B cell (primary cell): ENCODE measurements at regions of chr3 and their contacts with region 1.

Region 1: DNA sequence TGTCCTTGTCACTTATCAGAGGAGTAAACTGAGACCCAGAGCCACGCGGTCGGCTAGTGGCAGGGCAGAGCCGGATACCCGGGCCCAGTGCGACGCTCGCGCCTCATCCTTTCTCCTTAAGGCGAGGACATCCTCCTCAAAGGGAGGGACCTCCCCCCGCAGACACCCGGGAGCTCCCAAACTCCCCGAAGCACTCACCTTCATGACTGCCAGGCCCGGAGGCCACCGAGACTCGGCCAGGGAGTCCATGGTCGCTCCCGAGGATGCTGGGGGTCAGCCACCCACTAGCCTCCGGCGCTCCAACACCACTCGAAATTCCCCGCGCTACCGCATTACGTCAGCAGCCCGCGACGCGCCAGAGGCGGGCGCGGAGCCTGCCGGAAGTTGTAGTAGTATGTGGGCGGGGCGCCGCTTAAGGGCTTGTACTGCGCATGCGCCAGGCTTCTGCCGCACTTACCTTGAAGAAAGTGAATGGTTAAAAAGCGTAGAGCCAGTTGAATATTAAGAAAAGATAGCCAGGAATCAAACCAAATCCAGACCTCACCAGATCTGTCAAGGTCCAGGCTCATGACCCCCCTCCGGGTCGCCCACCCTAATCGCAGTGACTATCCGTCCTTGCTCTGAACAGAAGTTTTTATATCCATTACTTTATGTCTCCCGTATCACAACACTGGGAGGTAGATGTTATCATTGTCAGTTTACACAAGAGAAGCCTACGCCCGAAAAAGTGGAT is at the start of gene RAD18:
- DNase-seq: peak; percentile 95
- ATAC-seq: peak; percentile 97
- H3K4me3 ChIP-seq: peak within 1 kb of the TSS; percentile 79 to 93 (median 85)
- H3K4me3 Mint-ChIP-seq: peak within 1 kb of the TSS; percentile 89
- H3K27ac ChIP-seq: peak within 1 kb of the TSS; percentile 81 to 93
- H3K27ac Mint-ChIP-seq: peak within 1 kb of the TSS; percentile 94
- H3K4me1 ChIP-seq: peaks cover 18 to 25% of the 10 kb centered on the region in 2 donors
- H3K4me1 Mint-ChIP-seq: peaks cover 34% of the 10 kb centered on the region
- H3K27me3 ChIP-seq: peaks cover 0 to 3% (median 0%) of the 10 kb centered on the region in 4 experiments
- H3K27me3 Mint-ChIP-seq: peaks cover 7% of the 10 kb centered on the region
- CTCF ChIP-seq: no peak
- total RNA-seq, gene RAD18: 20.6 and 21.3 TPM in 2 replicates

Region 2: GRCh38 chr3:8519156-8519555 is 444.1 kb before region 1 on chr3:
- CTCF ChIA-PET with region 1: no interaction called
- POLR2A ChIA-PET with region 1: no interaction called
- intact Hi-C with region 1: no loop called
- DNase-seq: no peak
- ATAC-seq: no peak
- H3K4me3 ChIP-seq: no peak overlapping the region
- H3K4me3 Mint-ChIP-seq: no peak overlapping the region
- H3K27ac ChIP-seq: no peak overlapping the region
- H3K27ac Mint-ChIP-seq: no peak overlapping the region
- H3K4me1 ChIP-seq: no peaks in the 10 kb centered on the region
- H3K4me1 Mint-ChIP-seq: peaks cover 2% of the 10 kb centered on the region
- H3K27me3 ChIP-seq: no peaks in the 10 kb centered on the region
- H3K27me3 Mint-ChIP-seq: no peaks in the 10 kb centered on the region
- CTCF ChIP-seq: no peak

Region 3: GRCh38 chr3:9249273-9250192 is 286.2 kb after region 1 on chr3 and contains the start of gene SRGAP3:
- CTCF ChIA-PET with region 1: no interaction called
- POLR2A ChIA-PET with region 1: no interaction called
- intact Hi-C with region 1: loop called (anchors 1 kb)
- DNase-seq: peak; percentile 85
- ATAC-seq: peak; percentile 100
- H3K4me3 ChIP-seq: peak within 1 kb of the TSS; percentile 61 to 88 (median 69)
- H3K4me3 Mint-ChIP-seq: peak within 1 kb of the TSS; percentile 86
- H3K27ac ChIP-seq: no peak within 1 kb of the TSS
- H3K27ac Mint-ChIP-seq: peak within 1 kb of the TSS; percentile 8
- H3K4me1 ChIP-seq: peaks cover 14 to 22% of the 10 kb centered on the region in 2 donors
- H3K4me1 Mint-ChIP-seq: peaks cover 20% of the 10 kb centered on the region
- H3K27me3 ChIP-seq: peaks cover 0 to 6% (median 0%) of the 10 kb centered on the region in 4 experiments
- H3K27me3 Mint-ChIP-seq: peaks cover 19% of the 10 kb centered on the region
- CTCF ChIP-seq: no peak
- total RNA-seq, gene SRGAP3: 1.5 and 3.4 TPM in 2 replicates